A549 (cell line): ENCODE measurements at regions of chr6 and their contacts with region 1.

Region 1: GRCh38 chr6:157756708-157757429 is 66.2 kb upstream of the SNX9 start:
- DNase-seq: peak; percentile 43 to 70
- ATAC-seq: peak; percentile 87 to 96
- H3K4me3 ChIP-seq: no peak overlapping the region
- H3K27ac ChIP-seq: peak overlapping the region in 1 of 2 experiments; percentile 64; a peak in 3 of 6 replicates
- H3K4me1 ChIP-seq: peaks cover 23% of the 10 kb centered on the region
- CTCF ChIP-seq: peak; percentile 85
- EP300 ChIP-seq: no peak
- POLR2A ChIP-seq: no peak
- RAD21 ChIP-seq: peak; percentile 83 to 86

Region 2: GRCh38 chr6:157548635-157549467 is 208.0 kb before region 1 on chr6:
- CTCF ChIA-PET with region 1: no interaction called
- POLR2A ChIA-PET with region 1: no interaction called
- DNase-seq: no peak
- ATAC-seq: no peak
- H3K4me3 ChIP-seq: no peak overlapping the region
- H3K27ac ChIP-seq: no peak overlapping the region
- H3K4me1 ChIP-seq: no peaks in the 10 kb centered on the region
- CTCF ChIP-seq: no peak
- EP300 ChIP-seq: no peak
- POLR2A ChIP-seq: no peak
- RAD21 ChIP-seq: no peak

Region 3: GRCh38 chr6:157770946-157771345 is 14.1 kb after region 1 on chr6:
- CTCF ChIA-PET with region 1: interaction called, 19 read pairs
- POLR2A ChIA-PET with region 1: no interaction called
- DNase-seq: no peak
- ATAC-seq: no peak; a peak in 1 of 6 replicates
- H3K4me3 ChIP-seq: no peak overlapping the region
- H3K27ac ChIP-seq: no peak overlapping the region
- H3K4me1 ChIP-seq: peaks cover 27% of the 10 kb centered on the region
- CTCF ChIP-seq: no peak
- EP300 ChIP-seq: no peak
- POLR2A ChIP-seq: no peak
- RAD21 ChIP-seq: no peak

Region 4: GRCh38 chr6:157821342-157822033 is 64.6 kb after region 1 on chr6:
- CTCF ChIA-PET with region 1: interaction called, 15 read pairs
- POLR2A ChIA-PET with region 1: no interaction called
- DNase-seq: no peak
- ATAC-seq: no peak
- H3K4me3 ChIP-seq: no peak overlapping the region
- H3K27ac ChIP-seq: no peak overlapping the region
- H3K4me1 ChIP-seq: peaks cover 22% of the 10 kb centered on the region
- CTCF ChIP-seq: no peak
- EP300 ChIP-seq: no peak
- POLR2A ChIP-seq: no peak
- RAD21 ChIP-seq: no peak

Region 5: DNA sequence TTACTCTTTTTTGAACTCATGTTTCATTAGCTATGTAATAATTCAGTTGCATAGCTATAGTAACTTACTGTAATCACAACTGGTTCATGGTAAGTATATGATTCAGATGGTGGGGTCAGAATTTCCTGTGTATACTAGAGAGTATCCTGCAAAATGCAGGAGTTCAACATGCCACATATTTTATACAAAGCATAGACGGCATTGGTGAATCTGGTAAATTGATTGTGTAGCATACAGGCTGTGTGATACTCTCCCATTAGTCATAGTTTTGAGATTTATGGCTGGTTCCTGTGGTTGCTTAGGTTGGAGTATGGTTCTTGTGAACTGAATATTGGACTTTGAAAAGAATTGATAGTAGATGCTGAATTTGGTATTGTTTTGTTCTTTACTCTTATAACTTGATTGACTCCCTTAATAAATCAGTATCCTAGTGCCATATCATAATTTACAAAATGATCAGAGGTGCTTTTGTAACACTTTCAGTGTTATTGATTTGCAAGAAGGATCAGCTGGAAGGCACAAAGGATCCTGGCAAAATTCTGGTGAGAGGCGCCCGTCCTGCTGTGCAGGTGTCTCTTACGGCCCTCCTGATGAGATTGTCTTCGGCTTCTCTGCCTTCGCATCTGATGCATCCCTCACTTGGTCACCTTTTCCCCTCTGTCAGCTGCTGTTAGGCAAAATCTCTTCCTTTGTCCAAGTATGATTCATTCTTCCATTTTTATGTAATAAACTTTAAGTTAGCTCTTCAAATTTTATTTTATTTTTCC is 88.8 kb after region 1 on chr6:
- CTCF ChIA-PET with region 1: interaction called, 13 read pairs
- POLR2A ChIA-PET with region 1: no interaction called
- DNase-seq: no peak
- ATAC-seq: no peak
- H3K4me3 ChIP-seq: no peak overlapping the region
- H3K27ac ChIP-seq: no peak overlapping the region
- H3K4me1 ChIP-seq: peaks cover 21% of the 10 kb centered on the region
- CTCF ChIP-seq: no peak
- EP300 ChIP-seq: no peak
- POLR2A ChIP-seq: no peak
- RAD21 ChIP-seq: no peak

Region 6: DNA sequence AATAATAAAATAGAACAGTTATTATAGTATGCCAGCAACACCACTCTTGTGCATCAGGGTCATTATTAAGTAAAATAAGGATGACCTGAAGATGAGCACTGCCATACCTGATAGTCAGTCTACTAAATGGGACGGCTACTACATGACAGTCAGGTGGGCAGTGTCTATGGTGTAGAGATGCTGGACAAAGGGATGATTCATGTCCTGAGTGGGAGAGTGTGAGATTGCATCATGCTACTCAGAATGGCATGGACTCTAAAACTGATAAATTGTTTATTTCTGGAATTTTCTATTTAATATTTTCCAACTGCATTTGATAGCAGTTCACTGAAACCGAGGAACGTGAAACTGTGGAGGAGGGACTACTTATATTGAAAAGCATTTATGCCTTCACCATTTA is 104.9 kb after region 1 on chr6:
- CTCF ChIA-PET with region 1: interaction called, 16 read pairs
- POLR2A ChIA-PET with region 1: no interaction called
- DNase-seq: peak in 1 of 2 experiments; percentile 11
- ATAC-seq: no peak; a peak in 1 of 6 replicates
- H3K4me3 ChIP-seq: no peak overlapping the region
- H3K27ac ChIP-seq: peak overlapping the region in 1 of 2 experiments; percentile 60; a peak in 2 of 6 replicates
- H3K4me1 ChIP-seq: peaks cover 37% of the 10 kb centered on the region
- CTCF ChIP-seq: no peak
- EP300 ChIP-seq: no peak
- POLR2A ChIP-seq: no peak
- RAD21 ChIP-seq: no peak

Region 7: DNA sequence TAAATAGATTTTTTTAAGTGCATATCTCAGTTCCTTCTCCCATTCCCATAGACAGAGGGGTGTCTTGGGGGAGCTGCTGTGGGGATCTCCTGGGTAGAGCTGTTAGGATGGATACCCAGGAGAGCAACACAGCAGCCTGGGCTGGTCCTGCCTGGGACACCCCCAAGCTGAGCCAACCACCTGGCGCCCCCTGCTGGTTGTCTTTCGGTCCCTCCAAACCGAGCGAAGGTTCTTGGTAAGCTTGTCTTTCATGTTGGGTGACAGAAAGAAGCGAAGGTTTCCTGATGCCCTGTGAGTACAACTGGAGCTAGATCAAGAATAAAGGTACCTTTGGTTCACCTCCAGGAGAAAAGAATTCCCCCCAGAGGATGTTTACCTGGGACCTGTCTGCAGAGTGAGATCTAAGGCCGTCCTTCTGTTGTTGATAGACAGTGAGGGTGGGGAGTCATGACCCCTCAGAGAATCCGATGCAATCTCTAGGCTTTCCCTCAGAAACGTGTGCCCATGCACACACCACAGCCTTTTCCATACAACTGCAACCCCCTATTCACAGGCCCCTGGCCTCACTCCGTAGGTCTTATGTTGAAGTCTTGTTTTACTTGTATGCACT is 117.0 kb after region 1 on chr6:
- CTCF ChIA-PET with region 1: interaction called, 61 read pairs
- POLR2A ChIA-PET with region 1: interaction called, 4 read pairs
- DNase-seq: peak; percentile 43 to 71
- ATAC-seq: peak; percentile 96 to 98
- H3K4me3 ChIP-seq: no peak overlapping the region
- H3K27ac ChIP-seq: no peak overlapping the region
- H3K4me1 ChIP-seq: peaks cover 11% of the 10 kb centered on the region; the same call in 2 of the 3 replicates
- CTCF ChIP-seq: peak; percentile 82
- EP300 ChIP-seq: no peak
- POLR2A ChIP-seq: no peak
- RAD21 ChIP-seq: peak; percentile 82 to 83

Region 8: GRCh38 chr6:157879873-157880254 is 123.0 kb after region 1 on chr6:
- CTCF ChIA-PET with region 1: interaction called, 16 read pairs
- POLR2A ChIA-PET with region 1: no interaction called
- DNase-seq: no peak
- ATAC-seq: no peak
- H3K4me3 ChIP-seq: no peak overlapping the region
- H3K27ac ChIP-seq: no peak overlapping the region
- H3K4me1 ChIP-seq: no peaks in the 10 kb centered on the region
- CTCF ChIP-seq: no peak
- EP300 ChIP-seq: no peak
- POLR2A ChIP-seq: no peak
- RAD21 ChIP-seq: no peak